PC-9 (cell line): ENCODE measurements at regions of chr1 and their contacts with region 1.

Region 1: DNA sequence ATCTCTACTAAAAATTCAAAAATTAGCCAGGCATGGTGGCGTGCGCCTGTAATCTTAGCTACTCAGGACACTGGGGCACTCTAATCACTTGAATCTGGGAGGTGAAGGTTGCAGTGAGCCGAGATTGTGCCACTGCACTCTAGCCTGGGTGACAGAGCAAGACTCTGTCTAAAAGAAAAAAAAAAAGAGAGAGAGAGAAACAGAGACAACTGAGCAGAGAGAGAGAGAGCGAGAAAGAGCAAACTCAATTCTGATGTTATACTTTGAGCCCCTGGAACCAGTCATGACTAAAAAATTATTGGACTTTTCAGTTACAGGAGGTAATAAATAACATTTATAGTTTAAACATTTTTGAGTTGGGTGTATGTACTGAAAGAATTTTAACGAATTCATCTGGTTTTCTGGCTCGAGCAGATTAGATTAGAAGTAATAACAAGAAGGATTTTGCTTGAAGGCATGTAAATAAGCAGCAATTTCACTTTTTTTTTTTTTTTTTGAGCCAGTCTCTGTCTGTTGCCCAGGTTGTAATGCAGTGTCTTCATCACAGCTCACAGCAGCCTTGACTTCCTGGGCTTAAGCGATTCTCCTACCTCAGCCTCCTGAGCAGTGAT is 19.9 kb upstream of the PSMA5 start:
- DNase-seq: no peak
- H3K4me3 ChIP-seq: no peak overlapping the region
- H3K27ac ChIP-seq: no peak overlapping the region
- H3K4me1 ChIP-seq: peaks cover 3% of the 10 kb centered on the region; the same call in 1 of the 2 replicates
- H3K27me3 ChIP-seq: peaks cover 37% of the 10 kb centered on the region
- CTCF ChIP-seq: no peak

Region 2: DNA sequence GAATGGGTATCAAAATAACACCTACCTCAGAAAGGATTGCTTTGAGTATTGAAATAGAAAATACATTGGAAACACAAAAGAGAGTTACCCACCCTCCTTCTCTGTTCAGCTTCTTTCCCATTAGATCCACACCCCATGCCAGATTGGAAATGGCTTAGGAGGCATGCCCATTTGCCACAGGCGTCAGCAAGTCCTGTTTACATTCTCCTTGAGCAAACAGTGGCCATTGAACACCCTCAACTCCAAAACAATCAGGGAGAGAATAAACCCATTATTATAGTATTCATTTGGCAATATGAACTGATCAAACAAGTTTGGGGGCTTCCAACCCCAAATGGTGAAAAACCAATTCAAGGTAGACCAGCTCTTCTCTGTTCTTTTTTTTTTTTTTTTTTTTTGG is 329.9 kb before region 1 on chr1:
- CTCF ChIA-PET with region 1: no interaction called
- POLR2A ChIA-PET with region 1: no interaction called
- intact Hi-C with region 1: no loop called
- DNase-seq: peak in 1 of 2 experiments; percentile 37
- H3K4me3 ChIP-seq: no peak overlapping the region
- H3K27ac ChIP-seq: no peak overlapping the region
- H3K4me1 ChIP-seq: 0 out of 2 replicates have a peak, but pooled peaks cover 3% of the 10 kb centered on the region
- H3K27me3 ChIP-seq: no peaks in the 10 kb centered on the region
- CTCF ChIP-seq: no peak

Region 3: DNA sequence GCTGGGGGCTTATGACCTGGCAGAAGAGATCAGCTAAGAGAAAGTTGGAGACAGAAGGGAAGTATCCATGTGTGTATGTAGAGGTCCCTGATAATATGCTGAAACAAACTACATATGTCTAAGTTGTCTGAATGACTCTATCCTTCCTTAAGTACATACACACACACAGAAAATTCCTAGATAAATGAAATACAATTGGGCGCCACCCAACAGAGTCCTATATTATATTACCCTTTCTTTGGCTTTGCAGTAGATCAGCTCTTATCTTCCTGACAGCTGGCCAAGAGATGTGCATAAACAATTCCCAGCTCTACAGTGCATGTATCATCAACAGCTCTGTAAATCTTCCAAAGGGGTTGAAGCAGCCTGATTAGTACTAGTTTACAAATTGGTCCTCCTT is 88.6 kb before region 1 on chr1:
- CTCF ChIA-PET with region 1: no interaction called
- POLR2A ChIA-PET with region 1: no interaction called
- intact Hi-C with region 1: no loop called
- DNase-seq: no peak
- H3K4me3 ChIP-seq: no peak overlapping the region
- H3K27ac ChIP-seq: no peak overlapping the region
- H3K4me1 ChIP-seq: no peaks in the 10 kb centered on the region
- H3K27me3 ChIP-seq: no peaks in the 10 kb centered on the region
- CTCF ChIP-seq: no peak

Region 4: DNA sequence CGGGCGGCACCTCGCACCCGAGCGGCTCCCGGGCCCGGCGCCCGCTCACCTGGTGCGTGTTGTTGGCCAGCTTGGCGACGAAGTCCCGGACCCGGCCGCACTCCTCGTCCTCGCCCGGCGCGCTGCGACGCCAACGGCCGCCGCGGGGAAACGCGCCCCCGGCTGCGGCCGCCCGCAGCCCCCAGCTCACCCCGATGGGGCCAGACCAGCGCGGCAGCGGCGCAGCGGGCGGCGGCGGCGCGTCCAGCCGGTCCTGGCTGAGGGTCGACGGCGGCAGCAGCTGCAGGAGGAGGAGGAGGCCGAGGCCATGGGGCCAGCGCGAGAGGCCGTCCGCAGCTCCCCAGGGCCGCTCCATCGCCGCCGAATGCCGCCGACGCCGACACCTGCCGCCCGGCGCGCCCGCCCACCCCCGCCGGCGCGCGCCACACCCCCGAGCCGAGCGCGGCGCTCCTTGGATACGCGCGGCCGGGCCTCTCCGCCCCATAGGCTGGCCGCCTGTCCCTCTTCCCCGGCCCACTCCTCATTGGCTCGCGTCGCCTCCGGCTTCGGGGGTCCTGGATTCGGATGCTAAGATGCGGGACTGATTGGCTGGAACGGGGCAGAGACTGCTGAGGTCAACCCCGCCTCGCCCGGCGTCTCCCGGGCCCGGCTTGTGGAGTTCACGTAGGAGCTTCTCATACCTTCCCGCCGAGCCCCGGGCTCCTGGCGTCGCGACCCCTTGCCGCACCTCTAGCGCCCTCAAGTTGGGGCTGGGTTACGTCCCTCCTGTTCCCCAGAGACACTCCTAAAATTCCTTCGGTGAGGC is 48.5 kb before region 1 on chr1 and contains the start of gene SORT1:
- CTCF ChIA-PET with region 1: no interaction called
- POLR2A ChIA-PET with region 1: no interaction called
- intact Hi-C with region 1: no loop called
- DNase-seq: peak; percentile 75 to 83
- H3K4me3 ChIP-seq: peak within 1 kb of the TSS; percentile 69
- H3K27ac ChIP-seq: no peak within 1 kb of the TSS
- H3K4me1 ChIP-seq: peaks cover 38% of the 10 kb centered on the region
- H3K27me3 ChIP-seq: no peaks in the 10 kb centered on the region
- CTCF ChIP-seq: peak; percentile 27; the same call in 1 of the 2 replicates
- total RNA-seq, gene SORT1: 25.7 and 27.9 TPM in 2 replicates

Region 5: DNA sequence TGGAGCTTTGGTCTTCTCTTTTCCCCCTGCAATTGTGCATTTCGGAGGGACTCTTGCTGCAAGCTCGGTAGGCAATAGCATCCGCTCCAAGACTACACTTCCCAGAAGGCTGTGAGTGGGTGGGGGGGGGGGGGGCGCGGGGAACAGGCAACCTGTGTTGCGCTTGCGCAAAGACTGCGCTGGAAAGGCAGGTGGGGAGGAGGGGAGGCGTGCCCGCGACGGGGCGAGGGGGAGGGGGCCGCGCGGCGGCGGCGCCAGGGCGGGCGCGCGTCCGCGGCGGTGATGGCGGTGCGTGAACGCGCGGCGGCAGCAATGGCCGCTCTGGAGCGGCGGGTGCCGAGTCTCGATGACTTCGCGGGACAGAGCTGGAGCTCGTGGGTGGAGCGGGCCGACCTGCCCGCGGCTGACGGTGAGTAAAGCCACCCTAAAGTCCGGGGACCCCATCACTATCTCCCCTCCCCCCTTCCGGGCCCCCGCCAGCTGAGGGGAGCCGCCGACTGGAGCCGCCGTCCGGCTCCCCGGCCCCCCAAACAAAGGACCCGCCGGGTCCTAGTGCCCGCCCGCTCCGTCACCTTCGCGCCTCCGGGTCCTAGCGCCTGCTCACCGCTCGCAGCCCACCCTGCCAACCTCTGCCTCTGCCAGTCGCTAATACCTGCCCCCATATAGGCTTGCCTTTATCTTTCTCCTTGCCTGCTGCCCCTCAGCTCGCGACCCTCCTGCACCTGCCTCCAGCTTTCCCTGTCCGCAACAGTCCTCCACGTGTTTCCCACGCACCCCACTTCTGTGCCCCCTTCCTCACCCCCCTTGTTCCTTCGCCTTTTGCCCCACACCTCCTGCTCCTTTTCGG is 37.7 kb after region 1 on chr1 and contains the start of gene ATXN7L2:
- CTCF ChIA-PET with region 1: no interaction called
- POLR2A ChIA-PET with region 1: interaction called, 13 read pairs
- intact Hi-C with region 1: no loop called
- DNase-seq: peak; percentile 75 to 87
- H3K4me3 ChIP-seq: peak within 1 kb of the TSS; percentile 68
- H3K27ac ChIP-seq: peak within 1 kb of the TSS; percentile 63
- H3K4me1 ChIP-seq: peaks cover 11% of the 10 kb centered on the region
- H3K27me3 ChIP-seq: peaks cover 37% of the 10 kb centered on the region
- CTCF ChIP-seq: no peak
- total RNA-seq, gene ATXN7L2: 4.7 and 5.7 TPM in 2 replicates